Activated CD8-positive, alpha-beta T cell treated with anti-CD3 and anti-CD28 coated beads for 36 hours (primary cell): ENCODE measurements at regions of chr2 and their contacts with region 1.

Region 1: GRCh38 chr2:39379643-39380524 is 57.2 kb downstream of the MAP4K3 start:
- DNase-seq: no peak
- ATAC-seq: peak; percentile 55
- H3K4me3 Mint-ChIP-seq: no peak overlapping the region
- H3K27ac Mint-ChIP-seq: no peak overlapping the region
- H3K4me1 Mint-ChIP-seq: peaks cover 26% of the 10 kb centered on the region
- H3K27me3 Mint-ChIP-seq: no peaks in the 10 kb centered on the region
- CTCF ChIP-seq: peak; percentile 67

Region 2: DNA sequence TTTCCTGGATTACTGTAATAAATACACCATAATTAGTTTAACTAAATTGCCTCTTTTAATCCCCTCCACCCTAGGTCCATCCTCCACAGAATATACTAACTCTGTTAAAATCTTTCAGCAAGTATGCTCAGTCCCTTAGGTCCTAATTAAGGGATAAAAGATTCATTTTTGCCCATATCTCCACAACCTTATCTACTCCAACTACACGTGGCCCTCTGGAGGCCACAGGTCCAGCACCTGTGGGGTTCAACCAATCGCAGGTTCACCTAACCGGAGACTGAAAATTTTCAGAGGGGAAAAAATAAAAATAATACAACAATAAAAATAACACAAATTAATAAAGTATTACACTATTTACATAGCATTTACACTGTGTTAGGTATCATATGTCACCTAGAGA is 29.2 kb before region 1 on chr2:
- CTCF ChIA-PET with region 1: no interaction called
- POLR2A ChIA-PET with region 1: no interaction called
- intact Hi-C with region 1: no loop called
- DNase-seq: no peak
- ATAC-seq: no peak
- H3K4me3 Mint-ChIP-seq: no peak overlapping the region
- H3K27ac Mint-ChIP-seq: no peak overlapping the region
- H3K4me1 Mint-ChIP-seq: peaks cover 4% of the 10 kb centered on the region
- H3K27me3 Mint-ChIP-seq: no peaks in the 10 kb centered on the region
- CTCF ChIP-seq: no peak

Region 3: DNA sequence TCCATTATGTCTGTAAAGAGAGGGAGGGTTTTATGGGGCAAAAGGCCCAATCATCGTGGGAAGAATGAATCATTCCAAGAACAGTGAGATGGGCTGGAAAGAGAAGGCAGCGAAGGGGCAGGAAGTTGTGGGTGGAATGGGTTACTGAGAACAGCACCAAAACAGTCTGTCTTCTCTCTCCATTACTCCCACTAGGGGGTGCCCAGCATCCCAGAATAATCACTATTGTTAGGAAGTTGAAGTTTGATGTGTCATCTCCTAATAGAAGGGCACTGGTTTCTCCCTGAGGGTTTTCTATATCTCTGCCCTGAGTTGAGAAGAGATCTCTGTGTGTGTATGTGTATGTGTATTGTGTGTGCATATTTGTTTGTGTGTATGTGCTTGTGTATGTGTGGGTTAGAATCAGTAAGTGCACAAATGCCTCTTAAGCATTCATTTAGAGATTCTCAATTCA is 133.8 kb after region 1 on chr2:
- CTCF ChIA-PET with region 1: interaction called, 4 read pairs
- POLR2A ChIA-PET with region 1: no interaction called
- intact Hi-C with region 1: loop called (anchors 2 kb)
- DNase-seq: peak; percentile 85
- ATAC-seq: peak; percentile 83
- H3K4me3 Mint-ChIP-seq: no peak overlapping the region
- H3K27ac Mint-ChIP-seq: peak overlapping the region; percentile 77
- H3K4me1 Mint-ChIP-seq: peaks cover 50% of the 10 kb centered on the region
- H3K27me3 Mint-ChIP-seq: peaks cover 1% of the 10 kb centered on the region
- CTCF ChIP-seq: peak; percentile 40

Region 4: GRCh38 chr2:39728941-39729351 is 349.1 kb after region 1 on chr2:
- CTCF ChIA-PET with region 1: interaction called, 41 read pairs
- POLR2A ChIA-PET with region 1: no interaction called
- intact Hi-C with region 1: no loop called
- DNase-seq: peak; percentile 60
- ATAC-seq: no peak
- H3K4me3 Mint-ChIP-seq: no peak overlapping the region
- H3K27ac Mint-ChIP-seq: no peak overlapping the region
- H3K4me1 Mint-ChIP-seq: peaks cover 4% of the 10 kb centered on the region
- H3K27me3 Mint-ChIP-seq: peaks cover 2% of the 10 kb centered on the region
- CTCF ChIP-seq: peak; percentile 80